MCF 10A (cell line): ENCODE measurements at regions of chr14 and their contacts with region 1.

Region 1: DNA sequence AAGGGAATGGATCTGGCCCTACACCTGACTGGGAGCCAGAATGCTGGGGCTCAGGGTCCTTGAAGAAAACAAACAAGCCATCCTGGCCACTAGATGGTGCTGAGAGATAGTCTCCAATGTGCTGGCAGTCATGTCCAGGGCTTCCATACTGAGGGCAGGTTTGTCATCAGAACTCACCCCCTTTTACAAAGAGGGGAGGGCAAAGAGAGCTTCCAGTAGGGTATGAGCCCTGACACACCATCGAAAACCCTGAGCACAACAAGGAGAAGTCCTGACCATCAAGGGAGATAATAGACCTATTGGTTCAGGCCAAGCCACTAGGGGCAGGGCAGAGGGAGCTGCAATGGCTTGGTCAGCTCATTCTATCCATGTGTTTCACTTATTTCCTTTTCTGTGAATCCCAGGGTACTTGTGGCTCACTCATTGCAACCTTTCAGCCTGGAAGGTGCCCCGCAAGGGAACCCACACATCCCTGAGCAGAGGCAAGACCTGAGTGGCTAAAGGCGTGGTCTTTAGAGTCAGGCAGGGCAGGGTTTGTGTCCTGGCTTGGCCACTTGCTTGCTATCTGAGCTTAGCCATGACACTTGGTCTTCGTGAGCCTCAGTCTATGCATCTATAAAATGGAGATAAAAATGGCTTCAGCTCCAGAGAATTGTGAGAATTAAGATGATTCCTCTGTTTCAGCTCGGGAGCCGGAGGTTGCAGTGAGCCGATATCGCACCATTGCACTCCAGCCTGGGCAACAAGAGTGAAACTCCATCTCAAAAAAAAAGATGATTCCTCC is 6.2 kb upstream of the PLEKHH1 start:
- DNase-seq: peak; percentile 69
- H3K4me3 Mint-ChIP-seq: no peak overlapping the region
- H3K27ac Mint-ChIP-seq: no peak overlapping the region
- H3K4me1 Mint-ChIP-seq: no peaks in the 10 kb centered on the region
- H3K27me3 Mint-ChIP-seq: peaks cover 37% of the 10 kb centered on the region
- CTCF ChIP-seq: peak; percentile 65

Region 2: DNA sequence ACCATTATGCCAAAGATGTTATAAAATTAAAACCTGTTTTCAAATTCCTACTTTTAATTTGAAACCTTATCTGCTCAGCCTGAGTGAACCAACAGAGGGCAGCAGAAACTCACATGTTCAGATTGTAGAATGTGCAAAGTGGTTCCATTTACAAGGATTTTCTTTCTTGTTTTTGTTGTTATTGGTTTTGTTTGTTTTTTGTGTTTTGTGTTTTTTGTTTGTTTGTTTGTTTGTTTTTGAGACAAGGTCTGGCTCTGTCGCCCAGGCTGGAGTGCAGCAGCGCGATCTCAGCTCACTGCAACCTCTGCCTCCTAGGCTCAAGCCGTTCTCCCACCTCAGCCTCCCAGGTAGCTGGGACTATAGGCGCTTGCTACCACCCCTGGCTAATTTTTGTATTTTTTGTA is 360.4 kb before region 1 on chr14:
- CTCF ChIA-PET with region 1: no interaction called
- POLR2A ChIA-PET with region 1: no interaction called
- intact Hi-C with region 1: no loop called
- DNase-seq: peak; percentile 62
- H3K4me3 Mint-ChIP-seq: no peak overlapping the region
- H3K27ac Mint-ChIP-seq: no peak overlapping the region
- H3K4me1 Mint-ChIP-seq: peaks cover 8% of the 10 kb centered on the region
- H3K27me3 Mint-ChIP-seq: no peaks in the 10 kb centered on the region
- CTCF ChIP-seq: peak; percentile 79

Region 3: GRCh38 chr14:67514650-67515385 is 12.1 kb before region 1 on chr14:
- CTCF ChIA-PET with region 1: interaction called, 63 read pairs
- POLR2A ChIA-PET with region 1: interaction called, 4 read pairs
- intact Hi-C with region 1: no loop called
- DNase-seq: peak; percentile 38
- H3K4me3 Mint-ChIP-seq: peak overlapping the region; percentile 76
- H3K27ac Mint-ChIP-seq: no peak overlapping the region
- H3K4me1 Mint-ChIP-seq: no peaks in the 10 kb centered on the region
- H3K27me3 Mint-ChIP-seq: peaks cover 29% of the 10 kb centered on the region
- CTCF ChIP-seq: no peak

Region 4: GRCh38 chr14:67551940-67552339 is 25.1 kb after region 1 on chr14:
- CTCF ChIA-PET with region 1: interaction called, 17 read pairs
- POLR2A ChIA-PET with region 1: no interaction called
- intact Hi-C with region 1: no loop called
- DNase-seq: no peak
- H3K4me3 Mint-ChIP-seq: no peak overlapping the region
- H3K27ac Mint-ChIP-seq: no peak overlapping the region
- H3K4me1 Mint-ChIP-seq: peaks cover 3% of the 10 kb centered on the region
- H3K27me3 Mint-ChIP-seq: no peaks in the 10 kb centered on the region
- CTCF ChIP-seq: no peak

Region 5: GRCh38 chr14:67583711-67584644 is 57.1 kb after region 1 on chr14:
- CTCF ChIA-PET with region 1: interaction called, 38 read pairs
- POLR2A ChIA-PET with region 1: no interaction called
- intact Hi-C with region 1: no loop called
- DNase-seq: peak; percentile 66
- H3K4me3 Mint-ChIP-seq: no peak overlapping the region
- H3K27ac Mint-ChIP-seq: no peak overlapping the region
- H3K4me1 Mint-ChIP-seq: no peaks in the 10 kb centered on the region
- H3K27me3 Mint-ChIP-seq: no peaks in the 10 kb centered on the region
- CTCF ChIP-seq: peak; percentile 65

Region 6: DNA sequence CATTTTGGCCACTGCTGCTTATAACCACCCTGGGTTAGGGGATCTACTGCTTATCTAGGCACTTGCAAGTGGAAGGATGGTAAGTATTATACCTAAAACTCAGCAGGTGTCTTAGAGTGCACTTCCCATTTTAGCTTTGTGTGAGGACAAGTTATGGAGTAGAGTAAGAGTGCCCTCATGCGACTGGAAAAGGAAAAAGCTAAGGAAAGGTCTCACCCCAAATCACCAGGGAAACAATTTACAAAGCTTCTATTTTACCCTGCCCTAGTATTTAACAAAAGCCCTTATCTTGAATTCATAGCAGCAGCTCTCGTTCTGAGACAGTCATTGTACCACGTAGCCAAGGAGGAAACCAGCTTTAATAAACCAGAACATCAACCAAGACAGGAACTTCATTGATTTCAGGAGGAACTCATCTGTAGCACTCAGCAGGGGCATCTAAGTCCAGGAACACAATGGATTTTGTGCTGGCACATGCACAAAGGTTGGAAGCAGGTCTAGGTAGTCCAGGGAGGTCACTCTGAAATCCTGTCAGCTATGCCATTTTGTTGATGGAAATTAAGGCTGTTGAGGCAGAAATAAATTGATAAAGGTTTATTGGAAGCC is 177.7 kb after region 1 on chr14:
- CTCF ChIA-PET with region 1: interaction called, 41 read pairs
- POLR2A ChIA-PET with region 1: no interaction called
- intact Hi-C with region 1: loop called (anchors 2 kb)
- DNase-seq: peak; percentile 70
- H3K4me3 Mint-ChIP-seq: no peak overlapping the region
- H3K27ac Mint-ChIP-seq: no peak overlapping the region
- H3K4me1 Mint-ChIP-seq: peaks cover 9% of the 10 kb centered on the region
- H3K27me3 Mint-ChIP-seq: no peaks in the 10 kb centered on the region
- CTCF ChIP-seq: peak; percentile 75

Region 7: DNA sequence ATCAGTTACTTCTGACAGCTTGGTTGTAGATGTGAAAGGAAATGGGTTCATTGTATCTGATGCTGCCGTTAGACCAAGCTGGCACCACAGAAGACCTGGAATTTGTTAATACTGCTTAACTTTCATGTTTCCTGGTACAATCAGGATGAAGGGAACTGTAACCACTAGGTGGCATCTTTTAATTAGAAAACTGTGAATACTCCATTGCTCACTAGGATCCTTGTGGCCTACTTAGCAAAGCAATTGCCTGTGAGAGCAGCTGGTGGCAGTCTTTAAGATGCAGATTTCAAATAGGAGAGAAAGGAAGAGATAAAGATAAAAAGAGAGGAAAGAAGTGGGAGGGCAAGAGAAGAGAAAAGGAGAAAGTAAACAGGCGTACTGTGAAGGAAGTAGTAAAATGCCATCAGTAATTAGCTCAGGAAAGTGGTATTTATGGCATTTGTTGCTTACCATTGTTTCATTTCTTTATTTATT is 407.2 kb after region 1 on chr14:
- CTCF ChIA-PET with region 1: no interaction called
- POLR2A ChIA-PET with region 1: no interaction called
- intact Hi-C with region 1: no loop called
- DNase-seq: peak; percentile 74
- H3K4me3 Mint-ChIP-seq: no peak overlapping the region
- H3K27ac Mint-ChIP-seq: peak overlapping the region; percentile 26
- H3K4me1 Mint-ChIP-seq: peaks cover 29% of the 10 kb centered on the region
- H3K27me3 Mint-ChIP-seq: no peaks in the 10 kb centered on the region
- CTCF ChIP-seq: peak; percentile 52